ENCODE measurements at regions of chr17 and their contacts with region 1.

Region 1: DNA sequence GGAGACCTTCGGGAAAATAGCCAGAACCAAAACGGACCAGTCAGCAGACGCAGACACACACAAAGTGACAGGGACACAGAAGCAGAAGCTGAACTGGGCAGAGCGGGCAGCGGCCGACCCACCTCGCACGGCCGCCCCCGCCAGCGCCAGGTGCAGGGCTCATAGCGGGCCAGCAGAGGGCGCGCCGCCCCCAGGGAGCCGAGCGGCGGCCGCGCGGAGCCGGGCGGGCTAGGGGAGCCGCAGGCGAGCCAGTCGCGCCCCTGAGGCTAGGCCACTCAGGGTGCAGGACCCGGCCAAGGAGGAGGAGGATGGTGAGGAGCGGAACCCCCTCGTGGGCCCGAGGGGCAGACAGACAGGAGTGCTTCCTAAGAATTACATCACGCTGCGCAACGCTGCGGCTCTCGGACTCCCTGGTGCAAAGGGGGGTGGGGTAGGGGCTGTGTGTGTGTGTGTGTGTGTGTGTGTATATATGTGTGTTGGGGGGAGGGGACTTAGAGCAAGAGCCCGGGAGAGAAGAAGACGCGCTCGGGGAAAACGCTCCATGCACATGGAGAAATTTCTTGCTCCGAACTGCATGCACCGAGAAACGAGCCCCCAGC is 913 bp upstream of the NOG start:
- DNase-seq: peak; percentile 77
- H3K4me3 ChIP-seq: peak overlapping the region; percentile 56
- H3K27ac ChIP-seq: no peak overlapping the region
- H3K4me1 ChIP-seq: peaks cover 20% of the 10 kb centered on the region
- H3K27me3 ChIP-seq: peaks cover 48% of the 10 kb centered on the region
- CTCF ChIP-seq: peak; percentile 72

Region 2: GRCh38 chr17:56679115-56679766 is 86.7 kb after region 1 on chr17:
- CTCF ChIA-PET with region 1: interaction called, 9 read pairs
- POLR2A ChIA-PET with region 1: no interaction called
- intact Hi-C with region 1: loop called (anchors 1 kb)
- DNase-seq: peak; percentile 56
- H3K4me3 ChIP-seq: peak overlapping the region; percentile 36
- H3K27ac ChIP-seq: no peak overlapping the region
- H3K4me1 ChIP-seq: peaks cover 6% of the 10 kb centered on the region
- H3K27me3 ChIP-seq: peaks cover 79% of the 10 kb centered on the region
- CTCF ChIP-seq: peak; percentile 81

Region 3: DNA sequence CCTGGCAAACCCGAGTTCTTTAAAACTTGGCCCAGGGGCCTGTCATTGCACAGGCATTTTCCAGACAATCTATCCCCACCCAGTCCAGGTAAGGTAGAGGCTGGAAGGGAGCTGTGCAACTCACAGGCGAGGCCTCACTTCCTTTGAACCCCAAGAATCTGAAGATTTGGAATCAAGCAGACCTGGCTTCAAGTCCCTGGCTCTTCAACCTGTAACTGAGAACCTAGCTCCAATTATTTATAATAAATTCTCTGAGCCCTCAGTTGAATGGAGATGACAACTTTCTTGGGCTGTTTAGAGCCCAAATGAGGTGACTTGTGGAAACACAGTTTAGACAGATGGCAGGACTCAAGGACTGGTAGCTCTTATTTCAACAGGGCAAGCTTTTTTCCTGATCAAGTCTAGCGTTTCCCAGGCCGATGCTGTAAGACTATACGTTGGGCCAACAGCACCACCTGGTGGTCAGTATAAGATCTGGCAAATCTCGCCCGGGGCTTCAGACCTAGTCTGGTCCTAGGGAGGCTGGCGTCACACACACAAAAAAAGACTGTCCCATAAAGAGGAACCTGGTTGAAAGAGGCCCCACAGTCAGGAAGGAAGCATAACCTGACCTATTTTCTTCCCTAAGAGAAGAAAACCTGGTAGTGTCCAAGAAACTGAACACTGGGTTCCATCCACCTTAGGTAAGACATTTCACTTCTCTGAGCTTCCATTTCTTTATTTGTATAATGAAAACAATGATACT is 123.2 kb after region 1 on chr17:
- CTCF ChIA-PET with region 1: interaction called, 10 read pairs
- POLR2A ChIA-PET with region 1: no interaction called
- intact Hi-C with region 1: loop called (anchors 1 kb)
- DNase-seq: peak; percentile 84
- H3K4me3 ChIP-seq: no peak overlapping the region
- H3K27ac ChIP-seq: no peak overlapping the region
- H3K4me1 ChIP-seq: no peaks in the 10 kb centered on the region
- H3K27me3 ChIP-seq: no peaks in the 10 kb centered on the region
- CTCF ChIP-seq: peak; percentile 87

Region 4: DNA sequence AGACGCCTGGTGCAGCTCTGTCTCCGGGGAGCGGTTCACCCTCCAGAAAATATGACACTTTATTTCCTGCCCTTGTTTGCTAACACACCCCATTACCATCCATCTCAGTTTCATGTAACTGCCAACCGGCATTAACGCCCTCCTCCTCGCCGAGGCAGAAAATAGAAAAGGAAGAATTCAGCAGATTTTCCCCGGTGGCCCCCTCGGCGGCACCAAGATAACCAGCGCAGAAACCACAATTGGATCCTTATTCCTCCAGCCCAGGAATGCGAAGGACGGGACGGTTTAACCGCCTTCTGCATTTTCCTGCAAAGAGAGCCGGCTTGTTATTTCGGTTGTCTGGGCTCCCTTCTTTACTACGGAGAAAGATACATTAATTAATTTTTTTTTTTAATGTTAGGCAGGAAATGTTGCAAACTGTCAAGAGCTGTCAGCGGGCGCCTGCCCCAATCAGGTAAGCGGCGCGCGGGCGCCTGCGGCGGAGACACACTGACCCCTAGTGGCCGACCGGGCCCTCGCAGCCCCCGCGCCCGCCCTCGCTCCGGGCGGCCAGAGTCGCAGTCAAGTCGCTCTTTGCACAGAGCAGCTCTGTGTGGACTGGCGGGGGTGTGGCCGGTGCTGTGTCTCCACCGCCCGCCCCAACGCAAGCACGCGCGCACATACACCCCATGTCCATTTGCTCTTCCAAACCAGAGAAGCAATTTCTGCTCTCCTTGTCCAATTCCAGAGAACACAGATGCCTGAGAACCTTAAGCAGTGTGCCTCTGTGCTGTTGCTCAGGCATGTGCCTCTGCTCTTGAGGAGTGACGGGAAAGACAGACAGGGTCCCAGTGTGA is 187.5 kb after region 1 on chr17:
- CTCF ChIA-PET with region 1: interaction called, 14 read pairs
- POLR2A ChIA-PET with region 1: no interaction called
- intact Hi-C with region 1: loop called (anchors 2 kb)
- DNase-seq: peak; percentile 76
- H3K4me3 ChIP-seq: peak overlapping the region; percentile 34
- H3K27ac ChIP-seq: no peak overlapping the region
- H3K4me1 ChIP-seq: peaks cover 16% of the 10 kb centered on the region
- H3K27me3 ChIP-seq: no peaks in the 10 kb centered on the region
- CTCF ChIP-seq: peak; percentile 98

Region 5: GRCh38 chr17:56939901-56940343 is 347.3 kb after region 1 on chr17:
- CTCF ChIA-PET with region 1: no interaction called
- POLR2A ChIA-PET with region 1: no interaction called
- intact Hi-C with region 1: loop called (anchors 2 kb)
- DNase-seq: peak; percentile 84
- H3K4me3 ChIP-seq: no peak overlapping the region
- H3K27ac ChIP-seq: no peak overlapping the region
- H3K4me1 ChIP-seq: no peaks in the 10 kb centered on the region
- H3K27me3 ChIP-seq: no peaks in the 10 kb centered on the region
- CTCF ChIP-seq: peak; percentile 67

Region 6: GRCh38 chr17:57626520-57627210 is 1034.1 kb after region 1 on chr17:
- CTCF ChIA-PET with region 1: no interaction called
- POLR2A ChIA-PET with region 1: interaction called, 11 read pairs
- intact Hi-C with region 1: no loop called
- DNase-seq: no peak
- H3K4me3 ChIP-seq: no peak overlapping the region
- H3K27ac ChIP-seq: no peak overlapping the region
- H3K4me1 ChIP-seq: no peaks in the 10 kb centered on the region
- H3K27me3 ChIP-seq: no peaks in the 10 kb centered on the region
- CTCF ChIP-seq: no peak

Measured in A673 (cell line).